ENCODE measurements at regions of chr4 and their contacts with region 1.

Region 1: GRCh38 chr4:25767877-25768725 is 94.7 kb downstream of the SEL1L3 start:
- DNase-seq: peak in 1 of 2 experiments; percentile 33
- H3K4me3 ChIP-seq: no peak overlapping the region
- H3K27ac ChIP-seq: no peak overlapping the region
- H3K4me1 ChIP-seq: no peaks in the 10 kb centered on the region
- H3K27me3 ChIP-seq: no peaks in the 10 kb centered on the region
- CTCF ChIP-seq: peak; percentile 82 to 92 (median 88)
- EP300 ChIP-seq: no peak
- POLR2A ChIP-seq: no peak
- RAD21 ChIP-seq: peak; percentile 96 to 98

Region 2: GRCh38 chr4:25421816-25422525 is 346.1 kb before region 1 on chr4:
- CTCF ChIA-PET with region 1: interaction called, 11 read pairs
- POLR2A ChIA-PET with region 1: no interaction called
- DNase-seq: no peak
- H3K4me3 ChIP-seq: no peak overlapping the region
- H3K27ac ChIP-seq: no peak overlapping the region
- H3K4me1 ChIP-seq: no peaks in the 10 kb centered on the region
- H3K27me3 ChIP-seq: peaks cover 0 to 1% (median 0%) of the 10 kb centered on the region in 4 experiments; a peak in 1 of 7 replicates
- CTCF ChIP-seq: no peak
- EP300 ChIP-seq: no peak
- POLR2A ChIP-seq: no peak
- RAD21 ChIP-seq: no peak

Region 3: GRCh38 chr4:25531272-25531671 is 236.8 kb before region 1 on chr4:
- CTCF ChIA-PET with region 1: interaction called, 18 read pairs
- POLR2A ChIA-PET with region 1: no interaction called
- DNase-seq: no peak
- H3K4me3 ChIP-seq: no peak overlapping the region
- H3K27ac ChIP-seq: no peak overlapping the region
- H3K4me1 ChIP-seq: no peaks in the 10 kb centered on the region
- H3K27me3 ChIP-seq: no peaks in the 10 kb centered on the region
- CTCF ChIP-seq: peak; percentile 8 to 44 (median 37); a peak in 3 of 4 replicates
- EP300 ChIP-seq: no peak
- POLR2A ChIP-seq: no peak
- RAD21 ChIP-seq: peak; percentile 38 to 54

Region 4: GRCh38 chr4:25667931-25668557 is 100.1 kb before region 1 on chr4:
- CTCF ChIA-PET with region 1: interaction called, 10 read pairs
- POLR2A ChIA-PET with region 1: no interaction called
- DNase-seq: no peak
- H3K4me3 ChIP-seq: no peak overlapping the region
- H3K27ac ChIP-seq: no peak overlapping the region
- H3K4me1 ChIP-seq: peaks cover 0 to 7% (median 3%) of the 10 kb centered on the region in 4 experiments; a peak in 5 of 7 replicates
- H3K27me3 ChIP-seq: no peaks in the 10 kb centered on the region
- CTCF ChIP-seq: peak in 1 of 3 experiments; percentile 4; a peak in 1 of 4 replicates
- EP300 ChIP-seq: no peak
- POLR2A ChIP-seq: no peak
- RAD21 ChIP-seq: peak in 1 of 2 experiments; percentile 35; a peak in 2 of 4 replicates

Region 5: GRCh38 chr4:25756503-25756902 is 11.6 kb before region 1 on chr4:
- CTCF ChIA-PET with region 1: interaction called, 75 read pairs
- POLR2A ChIA-PET with region 1: no interaction called
- DNase-seq: no peak
- H3K4me3 ChIP-seq: no peak overlapping the region
- H3K27ac ChIP-seq: no peak overlapping the region
- H3K4me1 ChIP-seq: no peaks in the 10 kb centered on the region
- H3K27me3 ChIP-seq: no peaks in the 10 kb centered on the region
- CTCF ChIP-seq: no peak
- EP300 ChIP-seq: no peak
- POLR2A ChIP-seq: no peak
- RAD21 ChIP-seq: no peak

Region 6: DNA sequence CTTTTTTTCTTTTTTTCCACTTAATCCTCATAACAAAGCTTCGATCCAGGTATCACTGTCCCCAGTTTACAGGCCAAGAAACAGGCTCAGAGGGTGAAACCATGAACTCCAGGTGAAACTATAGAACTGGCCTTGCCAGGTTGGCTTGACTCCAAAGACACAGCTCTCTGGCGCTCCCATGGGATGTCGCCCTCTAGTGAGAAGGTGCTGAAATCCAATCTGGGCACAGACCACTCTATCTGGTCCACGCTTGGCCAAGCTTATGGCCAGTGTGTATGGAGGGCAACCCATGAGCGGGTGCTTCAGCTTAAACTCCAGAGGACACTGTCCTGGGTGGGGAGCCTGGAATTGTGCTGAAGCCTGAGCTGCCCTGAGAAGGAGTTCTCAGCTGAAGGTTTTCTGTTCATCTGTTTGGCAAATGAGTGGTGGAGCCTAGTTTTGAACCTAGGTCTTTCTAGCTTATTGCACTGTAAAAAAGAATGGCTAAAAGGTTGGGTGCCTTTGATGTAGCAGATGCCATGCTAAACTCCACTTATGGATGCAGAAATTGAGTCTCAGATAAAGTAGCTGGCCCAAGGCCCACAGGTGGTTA is 24.2 kb after region 1 on chr4:
- CTCF ChIA-PET with region 1: interaction called, 19 read pairs
- POLR2A ChIA-PET with region 1: no interaction called
- DNase-seq: peak in 1 of 2 experiments; percentile 71
- H3K4me3 ChIP-seq: no peak overlapping the region
- H3K27ac ChIP-seq: no peak overlapping the region
- H3K4me1 ChIP-seq: peaks cover 1 to 13% (median 6%) of the 10 kb centered on the region in 4 experiments; a peak in 3 of 7 replicates
- H3K27me3 ChIP-seq: no peaks in the 10 kb centered on the region
- CTCF ChIP-seq: peak; percentile 80 to 92 (median 80)
- EP300 ChIP-seq: no peak
- POLR2A ChIP-seq: no peak
- RAD21 ChIP-seq: peak; percentile 72 to 78

Region 7: GRCh38 chr4:25928379-25929297 is 160.5 kb after region 1 on chr4:
- CTCF ChIA-PET with region 1: no interaction called
- POLR2A ChIA-PET with region 1: no interaction called
- DNase-seq: no peak
- H3K4me3 ChIP-seq: no peak overlapping the region
- H3K27ac ChIP-seq: no peak overlapping the region
- H3K4me1 ChIP-seq: no peaks in the 10 kb centered on the region; a peak in 2 of 7 replicates
- H3K27me3 ChIP-seq: no peaks in the 10 kb centered on the region
- CTCF ChIP-seq: no peak
- EP300 ChIP-seq: no peak
- POLR2A ChIP-seq: no peak
- RAD21 ChIP-seq: no peak

Measured in H1 (cell line).